ENCODE measurements at regions of chr12 and their contacts with region 1.

Region 1: DNA sequence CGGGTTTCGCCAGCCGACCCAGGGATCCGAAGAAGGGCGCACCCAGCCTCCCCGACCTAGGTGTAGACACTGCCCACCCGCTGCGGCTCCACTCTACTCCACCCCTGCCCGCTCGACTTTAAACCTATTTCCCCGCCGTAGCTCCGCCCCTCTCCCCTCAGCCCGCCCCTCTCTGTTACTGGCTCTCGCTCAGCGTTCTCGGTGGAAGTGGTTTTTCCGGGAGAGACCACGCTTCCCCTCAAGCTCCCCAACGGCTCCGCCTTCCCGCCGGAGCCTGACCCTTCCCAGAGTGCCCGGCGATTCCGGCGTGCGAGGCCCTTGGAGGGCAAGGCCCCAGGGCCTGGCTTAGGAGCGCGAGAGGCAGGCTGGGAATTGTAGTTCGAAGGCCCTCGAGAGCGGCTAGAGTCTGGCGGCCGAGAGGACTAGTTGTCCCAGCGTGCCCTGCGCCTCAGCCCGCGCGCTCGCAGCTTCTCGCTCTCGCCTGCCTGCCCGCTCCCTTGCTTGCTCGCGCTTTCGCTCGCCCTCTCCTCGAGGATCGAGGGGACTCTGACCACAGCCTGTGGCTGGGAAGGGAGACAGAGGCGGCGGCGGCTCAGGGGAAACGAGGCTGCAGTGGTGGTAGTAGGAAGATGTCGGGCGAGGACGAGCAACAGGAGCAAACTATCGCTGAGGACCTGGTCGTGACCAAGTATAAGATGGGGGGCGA is at the start of gene PA2G4:
- DNase-seq: peak; percentile 83 to 97 (median 96)
- ATAC-seq: peak; percentile 93
- H3K4me3 ChIP-seq: peak within 1 kb of the TSS; percentile 87
- H3K4me3 Mint-ChIP-seq: peak within 1 kb of the TSS; percentile 91 to 100 (median 98)
- H3K27ac ChIP-seq: peak within 1 kb of the TSS; percentile 82
- H3K27ac Mint-ChIP-seq: peak within 1 kb of the TSS; percentile 92 to 99 (median 98)
- H3K4me1 ChIP-seq: peaks cover 36 to 37% of the 10 kb centered on the region in 2 donors
- H3K4me1 Mint-ChIP-seq: peaks cover 31 to 69% (median 64%) of the 10 kb centered on the region in 7 donors
- H3K27me3 ChIP-seq: no peaks in the 10 kb centered on the region
- H3K27me3 Mint-ChIP-seq: peaks cover 0 to under 1% (median 0%) of the 10 kb centered on the region in 5 donors
- total RNA-seq, gene PA2G4: 61.7 to 254 (median 109) TPM

Region 2: GRCh38 chr12:55817346-55818139 is 286.7 kb before region 1 on chr12 and contains the starts of genes ORMDL2 and SARNP:
- CTCF ChIA-PET with region 1: no interaction called
- POLR2A ChIA-PET with region 1: interaction called, 9 read pairs
- intact Hi-C with region 1: loop called (anchors 1 kb)
- DNase-seq: peak; percentile 81 to 99 (median 98)
- ATAC-seq: peak; percentile 96
- H3K4me3 ChIP-seq: peak within 1 kb of the TSS; percentile 94
- H3K4me3 Mint-ChIP-seq: no peak within 1 kb of the TSS
- H3K27ac ChIP-seq: peak within 1 kb of the TSS; percentile 88
- H3K27ac Mint-ChIP-seq: no peak within 1 kb of the TSS
- H3K4me1 ChIP-seq: peaks cover 22 to 41% of the 10 kb centered on the region in 2 donors
- H3K4me1 Mint-ChIP-seq: peaks cover 32 to 45% (median 37%) of the 10 kb centered on the region in 7 donors
- H3K27me3 ChIP-seq: no peaks in the 10 kb centered on the region
- H3K27me3 Mint-ChIP-seq: no peaks in the 10 kb centered on the region
- total RNA-seq, gene ORMDL2: 12.3 to 67.3 (median 40.5) TPM
- total RNA-seq, gene SARNP: 28.0 to 73.0 (median 41.7) TPM

Region 3: GRCh38 chr12:55966408-55967281 is 137.6 kb before region 1 on chr12 and contains the start of gene CDK2:
- CTCF ChIA-PET with region 1: no interaction called
- POLR2A ChIA-PET with region 1: no interaction called
- intact Hi-C with region 1: loop called in 1 of 2 experiments (anchors 2 kb)
- DNase-seq: peak; percentile 70 to 95 (median 79)
- ATAC-seq: peak; percentile 99
- H3K4me3 ChIP-seq: peak within 1 kb of the TSS; percentile 73
- H3K4me3 Mint-ChIP-seq: peak within 1 kb of the TSS; percentile 88 to 97 (median 92)
- H3K27ac ChIP-seq: peak within 1 kb of the TSS; percentile 69
- H3K27ac Mint-ChIP-seq: peak within 1 kb of the TSS; percentile 61 to 94 (median 86)
- H3K4me1 ChIP-seq: peaks cover 12 to 18% of the 10 kb centered on the region in 2 donors
- H3K4me1 Mint-ChIP-seq: peaks cover 19 to 51% (median 33%) of the 10 kb centered on the region in 7 donors
- H3K27me3 ChIP-seq: no peaks in the 10 kb centered on the region
- H3K27me3 Mint-ChIP-seq: no peaks in the 10 kb centered on the region
- total RNA-seq, gene CDK2: 19.0 to 77.2 (median 24.1) TPM

Region 4: DNA sequence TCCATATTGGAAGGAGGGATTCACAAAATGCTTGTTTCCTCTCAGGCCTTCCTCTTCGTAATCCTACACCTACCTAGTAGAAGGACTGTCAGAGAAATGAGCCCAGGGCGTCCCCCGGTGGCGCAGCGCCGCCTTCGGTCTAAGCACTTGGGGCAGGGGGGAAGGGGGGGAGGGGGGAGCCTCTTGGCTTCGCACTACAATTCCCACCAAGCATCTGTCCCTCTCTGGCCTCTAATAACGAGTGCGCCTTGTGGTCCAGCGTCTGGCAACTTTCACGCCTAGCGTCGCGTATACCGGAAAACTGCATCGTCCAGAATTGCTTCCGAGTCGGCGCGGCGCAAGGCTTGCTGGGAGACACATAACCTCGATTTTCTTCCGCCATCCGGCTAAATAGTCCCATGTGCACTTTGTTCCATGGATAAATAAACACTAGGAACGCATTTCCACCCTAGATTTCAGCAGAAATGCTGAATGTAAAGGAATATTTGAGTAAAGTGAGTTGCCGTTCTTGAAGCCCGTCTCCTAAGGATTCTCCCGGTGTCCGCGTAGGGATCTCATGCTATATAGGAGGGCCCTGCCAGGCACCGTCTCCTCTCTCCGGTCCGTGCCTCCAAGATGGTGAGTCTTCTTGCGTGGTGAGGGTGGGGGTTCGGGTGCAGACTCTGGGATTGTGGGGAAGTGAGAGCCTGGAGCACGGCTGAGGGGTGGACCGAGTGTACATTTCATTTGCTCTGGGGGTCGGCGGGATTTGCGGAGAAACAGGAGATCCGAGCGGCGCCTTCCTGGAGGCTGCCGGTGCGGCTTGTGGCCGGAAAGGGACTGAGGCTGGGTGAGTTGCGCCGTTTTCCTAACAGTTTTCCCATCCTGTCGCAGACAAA is 62.5 kb before region 1 on chr12 and contains the start of gene RPS26:
- CTCF ChIA-PET with region 1: interaction called, 13 read pairs
- POLR2A ChIA-PET with region 1: interaction called, 33 read pairs
- intact Hi-C with region 1: loop called (anchors 1 kb)
- DNase-seq: peak; percentile 75 to 97 (median 94)
- ATAC-seq: peak; percentile 94
- H3K4me3 ChIP-seq: peak within 1 kb of the TSS; percentile 100
- H3K4me3 Mint-ChIP-seq: peak within 1 kb of the TSS; percentile 91 to 100 (median 98)
- H3K27ac ChIP-seq: peak within 1 kb of the TSS; percentile 84
- H3K27ac Mint-ChIP-seq: peak within 1 kb of the TSS; percentile 94 to 99 (median 97)
- H3K4me1 ChIP-seq: peaks cover 16 to 19% of the 10 kb centered on the region in 2 donors
- H3K4me1 Mint-ChIP-seq: peaks cover 14 to 56% (median 34%) of the 10 kb centered on the region in 7 donors
- H3K27me3 ChIP-seq: no peaks in the 10 kb centered on the region
- H3K27me3 Mint-ChIP-seq: no peaks in the 10 kb centered on the region
- total RNA-seq, gene RPS26: 40.8 to 64.5 (median 46.4) TPM

Region 5: DNA sequence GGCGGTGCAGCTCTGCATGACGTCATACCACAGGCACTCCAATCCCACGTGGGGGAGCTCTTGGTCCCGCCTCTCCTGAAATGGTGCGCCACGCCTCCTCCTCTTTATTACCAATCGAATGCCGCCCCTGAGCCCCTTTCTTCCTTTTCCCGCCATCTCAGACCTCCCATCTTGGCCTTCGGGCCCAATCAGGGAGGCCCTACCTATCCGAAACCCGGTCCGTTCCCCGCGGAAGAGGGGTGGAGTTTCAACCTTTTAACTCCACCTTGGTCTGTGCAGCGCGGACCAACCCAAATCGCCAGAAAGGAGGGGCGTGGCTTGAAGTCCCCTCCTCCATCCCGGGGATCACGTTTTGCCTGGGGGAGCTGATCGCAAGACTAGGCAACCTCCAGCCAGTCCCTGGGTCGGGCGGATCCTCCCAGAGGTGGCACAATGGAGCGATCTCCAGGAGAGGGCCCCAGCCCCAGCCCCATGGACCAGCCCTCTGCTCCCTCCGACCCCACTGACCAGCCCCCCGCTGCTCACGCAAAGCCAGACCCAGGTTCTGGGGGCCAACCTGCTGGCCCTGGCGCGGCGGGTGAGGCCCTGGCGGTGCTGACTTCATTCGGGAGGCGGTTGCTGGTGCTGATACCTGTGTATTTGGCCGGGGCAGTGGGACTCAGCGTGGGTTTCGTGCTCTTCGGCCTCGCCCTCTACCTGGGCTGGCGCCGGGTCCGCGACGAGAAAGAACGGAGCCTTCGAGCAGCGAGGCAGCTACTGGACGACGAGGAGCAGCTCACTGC is 23.8 kb after region 1 on chr12 and contains the start of gene ESYT1:
- CTCF ChIA-PET with region 1: interaction called, 3 read pairs
- POLR2A ChIA-PET with region 1: interaction called, 21 read pairs
- intact Hi-C with region 1: loop called (anchors 1 kb)
- DNase-seq: peak; percentile 75 to 100 (median 98)
- ATAC-seq: peak; percentile 94
- H3K4me3 ChIP-seq: peak within 1 kb of the TSS; percentile 77
- H3K4me3 Mint-ChIP-seq: peak within 1 kb of the TSS; percentile 95 to 100 (median 98)
- H3K27ac ChIP-seq: peak within 1 kb of the TSS; percentile 84
- H3K27ac Mint-ChIP-seq: peak within 1 kb of the TSS; percentile 86 to 99 (median 91)
- H3K4me1 ChIP-seq: peaks cover 39 to 54% of the 10 kb centered on the region in 2 donors
- H3K4me1 Mint-ChIP-seq: peaks cover 40 to 76% (median 65%) of the 10 kb centered on the region in 7 donors
- H3K27me3 ChIP-seq: no peaks in the 10 kb centered on the region
- H3K27me3 Mint-ChIP-seq: no peaks in the 10 kb centered on the region
- total RNA-seq, gene ESYT1: 121 to 300 (median 221) TPM

Region 6: GRCh38 chr12:56724972-56725722 is 620.9 kb after region 1 on chr12 and contains the start of gene NACA:
- CTCF ChIA-PET with region 1: no interaction called
- POLR2A ChIA-PET with region 1: no interaction called
- intact Hi-C with region 1: loop called in 1 of 2 experiments (anchors 1 kb)
- DNase-seq: peak; percentile 85 to 99 (median 96)
- ATAC-seq: peak; percentile 95
- H3K4me3 ChIP-seq: peak within 1 kb of the TSS; percentile 100
- H3K4me3 Mint-ChIP-seq: peak within 1 kb of the TSS; percentile 94 to 100 (median 97)
- H3K27ac ChIP-seq: peak within 1 kb of the TSS; percentile 87
- H3K27ac Mint-ChIP-seq: peak within 1 kb of the TSS; percentile 94 to 100 (median 98)
- H3K4me1 ChIP-seq: peaks cover 40 to 43% of the 10 kb centered on the region in 2 donors
- H3K4me1 Mint-ChIP-seq: peaks cover 39 to 53% (median 49%) of the 10 kb centered on the region in 7 donors
- H3K27me3 ChIP-seq: no peaks in the 10 kb centered on the region
- H3K27me3 Mint-ChIP-seq: no peaks in the 10 kb centered on the region
- total RNA-seq, gene NACA: 834 to 1,486 (median 1,355) TPM

Measured in naive thymus-derived CD4-positive, alpha-beta T cell (primary cell).